ENCODE measurements at regions of chr14 and their contacts with region 1.

Region 1: GRCh38 chr14:68676511-68676943 is 116.3 kb downstream of the ZFP36L1 start:
- DNase-seq: peak; percentile 98
- H3K4me3 ChIP-seq: no peak overlapping the region
- H3K27ac ChIP-seq: peak overlapping the region; percentile 95
- H3K4me1 ChIP-seq: peaks cover 41% of the 10 kb centered on the region
- H3K27me3 ChIP-seq: no peaks in the 10 kb centered on the region
- CTCF ChIP-seq: peak in 1 of 2 donors; percentile 32

Region 2: DNA sequence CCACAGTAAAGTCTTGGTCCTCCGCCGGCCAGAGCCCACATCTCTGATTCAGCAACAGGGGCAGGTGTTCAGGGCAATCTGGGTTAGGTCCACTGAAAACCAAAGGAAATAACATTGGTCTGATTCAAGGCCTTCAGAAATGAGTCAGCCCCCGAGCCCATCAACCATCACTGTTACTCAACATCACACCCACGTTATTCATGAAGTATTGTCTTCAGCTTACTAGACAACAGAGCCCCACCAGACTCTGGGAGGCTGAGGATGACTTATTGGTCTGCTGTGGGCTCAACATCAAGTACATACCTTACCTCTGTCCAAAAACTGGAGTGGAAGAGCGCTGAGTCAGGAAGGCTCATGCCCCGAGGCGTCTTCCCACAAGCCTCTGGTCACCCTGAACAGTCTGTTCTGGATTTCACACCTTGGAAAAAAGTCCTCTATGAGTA is 18.8 kb after region 1 on chr14:
- CTCF ChIA-PET with region 1: no interaction called
- dilution Hi-C with region 1: no loop called
- in situ Hi-C with region 1: no loop called
- intact Hi-C with region 1: loop called (anchors 1 kb)
- DNase-seq: peak; percentile 100
- H3K4me3 ChIP-seq: no peak overlapping the region
- H3K27ac ChIP-seq: peak overlapping the region; percentile 91
- H3K4me1 ChIP-seq: peaks cover 32% of the 10 kb centered on the region
- H3K27me3 ChIP-seq: no peaks in the 10 kb centered on the region
- CTCF ChIP-seq: no peak